Spleen (tissue), 13 donors: ENCODE measurements at regions of chr14 and their contacts with region 1.

Region 1: GRCh38 chr14:96100161-96101029 is 61.2 kb downstream of the C14orf132 start:
- DNase-seq: peak; percentile 81
- H3K4me3 ChIP-seq: no peak overlapping the region
- H3K27ac ChIP-seq: no peak overlapping the region
- H3K4me1 ChIP-seq: peaks cover 0 to 11% (median 4%) of the 10 kb centered on the region in 6 donors
- H3K27me3 ChIP-seq: no peaks in the 10 kb centered on the region
- CTCF ChIP-seq: peak; percentile 37 to 91 (median 68)
- POLR2A ChIP-seq: no peak

Region 2: DNA sequence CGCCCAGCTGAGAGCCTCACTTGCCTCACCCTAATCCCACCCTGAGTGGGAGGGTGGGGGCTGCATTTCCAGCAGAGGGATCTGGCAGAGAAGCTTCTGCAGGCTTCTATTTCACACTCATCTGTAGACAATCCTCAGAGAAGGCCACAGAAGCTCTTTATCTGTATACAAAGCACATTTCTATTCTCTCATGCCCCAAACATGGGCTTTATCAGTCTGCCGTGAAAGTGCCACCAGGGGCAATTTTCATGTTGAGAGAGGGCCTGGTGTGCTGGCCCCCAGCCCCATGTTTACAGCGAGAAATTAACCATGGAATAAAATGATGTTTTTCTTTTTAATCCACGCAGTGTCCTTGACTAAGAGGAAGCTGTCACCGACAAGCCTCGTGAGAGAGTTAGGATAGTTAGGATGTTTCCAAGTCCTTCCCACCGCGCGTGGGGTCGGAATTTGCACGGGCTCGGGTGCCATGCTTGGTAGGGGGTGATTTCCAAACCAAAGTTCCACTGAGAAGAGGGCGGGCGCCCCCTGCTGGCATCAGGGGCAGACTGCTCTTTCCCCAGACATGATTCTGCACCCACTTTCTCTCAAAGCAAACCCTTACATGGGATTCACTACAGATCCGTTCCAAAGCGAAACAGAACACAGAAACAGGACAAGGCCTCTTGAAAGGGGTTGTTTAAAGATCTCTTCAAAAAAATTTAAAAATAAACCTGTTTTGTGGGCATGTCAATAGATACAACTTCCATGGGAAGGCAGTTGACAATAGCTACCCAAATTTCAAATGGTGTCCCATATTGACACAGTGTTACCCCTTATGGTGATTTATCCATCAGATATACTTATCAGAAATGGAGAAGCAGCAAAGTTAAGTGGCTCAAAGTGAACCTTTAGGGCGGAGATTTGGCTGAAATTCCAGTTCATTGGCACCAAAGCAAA is 175.1 kb after region 1 on chr14:
- intact Hi-C with region 1: loop called (anchors 5 kb)
- DNase-seq: peak; percentile 88
- H3K4me3 ChIP-seq: no peak overlapping the region
- H3K27ac ChIP-seq: no peak overlapping the region
- H3K4me1 ChIP-seq: peaks cover 0 to 12% (median 8%) of the 10 kb centered on the region in 6 donors
- H3K27me3 ChIP-seq: no peaks in the 10 kb centered on the region
- CTCF ChIP-seq: peak; percentile 50 to 91 (median 83)
- POLR2A ChIP-seq: no peak

Region 3: DNA sequence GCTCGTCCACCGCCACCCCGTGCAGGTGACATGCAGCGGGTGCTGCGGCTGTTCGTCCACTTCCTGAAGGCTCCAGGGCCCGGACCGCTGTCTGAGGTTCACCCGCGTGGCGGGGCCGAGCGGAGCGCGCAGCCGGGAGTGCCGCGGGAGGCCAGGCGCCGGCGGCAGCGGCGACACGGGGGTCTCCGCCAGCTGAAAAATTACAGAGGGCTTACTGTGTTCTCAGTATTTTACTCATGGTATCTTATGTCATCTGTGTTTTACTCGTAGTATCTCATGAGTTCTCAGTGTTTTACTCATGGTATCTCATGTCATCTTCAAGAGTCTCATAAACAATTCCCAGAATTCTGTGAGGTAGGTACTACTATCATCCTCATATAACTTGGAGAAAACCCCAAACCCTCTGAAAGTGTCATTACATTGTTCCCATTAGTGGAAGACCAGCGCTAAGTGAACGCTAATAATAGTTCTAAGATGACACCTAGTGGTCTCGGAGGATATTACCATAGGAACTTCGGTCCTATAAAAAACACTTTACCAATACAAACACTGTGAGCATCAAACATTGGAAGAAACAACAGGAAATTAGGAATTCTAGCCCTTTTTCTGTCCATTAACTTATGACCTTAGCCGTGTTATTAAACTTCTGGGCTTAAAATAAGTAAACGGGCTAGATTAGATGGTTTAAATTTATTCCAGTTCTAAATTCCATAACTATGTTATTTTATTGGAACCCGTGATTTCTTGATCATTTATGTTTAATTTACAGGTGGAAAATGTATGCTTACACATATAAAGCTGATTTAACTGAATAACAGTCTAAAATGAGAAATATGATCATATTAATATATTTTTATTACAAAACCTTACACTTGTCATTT is 324.0 kb after region 1 on chr14:
- intact Hi-C with region 1: loop called (anchors 10 kb)
- DNase-seq: peak; percentile 83
- H3K4me3 ChIP-seq: peak overlapping the region; percentile 10 to 64 (median 33)
- H3K27ac ChIP-seq: peak overlapping the region in 2 of 8 donors; percentile 15 to 22
- H3K4me1 ChIP-seq: peaks cover 0 to 25% (median 5%) of the 10 kb centered on the region in 6 donors
- H3K27me3 ChIP-seq: peaks cover 0 to 9% (median 0%) of the 10 kb centered on the region in 7 donors
- CTCF ChIP-seq: peak; percentile 53 to 91 (median 81)
- POLR2A ChIP-seq: no peak